Motor neuron (in vitro differentiated cells): ENCODE measurements at regions of chr3 and their contacts with region 1.

Region 1: GRCh38 chr3:32934150-32934742 is 17.2 kb upstream of the CCR4 start:
- ATAC-seq: peak in 1 of 8 experiments; percentile 26
- H3K4me3 ChIP-seq: no peak overlapping the region
- H3K27ac ChIP-seq: no peak overlapping the region
- H3K4me1 ChIP-seq: no peaks in the 10 kb centered on the region

Region 2: GRCh38 chr3:32733631-32734229 is 200.5 kb before region 1 on chr3:
- in situ Hi-C with region 1: loop called in 6 of 9 experiments (anchors 10 to 25 kb)
- ATAC-seq: peak in 4 of 8 experiments; percentile 14 to 54 (median 41)
- H3K4me3 ChIP-seq: no peak overlapping the region
- H3K27ac ChIP-seq: no peak overlapping the region
- H3K4me1 ChIP-seq: no peaks in the 10 kb centered on the region

Region 3: GRCh38 chr3:32743934-32744333 is 190.3 kb before region 1 on chr3:
- in situ Hi-C with region 1: loop called in 7 of 9 experiments (anchors 10 to 25 kb)
- ATAC-seq: peak in 6 of 8 experiments; percentile 45 to 100 (median 86)
- H3K4me3 ChIP-seq: no peak overlapping the region
- H3K27ac ChIP-seq: no peak overlapping the region
- H3K4me1 ChIP-seq: peaks cover 0 to 12% of the 10 kb centered on the region in 2 donors